Esophagus muscularis mucosa (tissue), 4 donors: ENCODE measurements at regions of chr5 and their contacts with region 1.

Region 1: DNA sequence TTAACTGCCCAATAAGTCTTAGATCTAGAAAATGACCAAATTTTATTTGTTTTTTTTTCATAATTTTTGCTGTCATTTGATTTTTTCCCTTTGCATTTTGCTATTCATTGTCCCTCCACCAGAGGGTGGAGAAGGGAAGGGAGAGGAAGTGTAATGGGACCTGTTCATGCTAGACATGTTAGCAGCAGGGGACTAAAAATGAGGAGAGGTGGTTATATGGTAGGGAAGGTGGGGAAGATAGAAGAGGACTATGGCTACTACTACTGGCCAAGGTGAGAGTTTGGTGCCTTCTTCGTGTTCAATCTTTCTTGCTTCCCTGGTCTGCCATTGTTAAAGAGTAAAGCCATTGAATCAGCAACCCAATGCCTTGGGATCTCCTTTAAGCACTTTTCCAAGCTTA is 6.4 kb downstream of the GRIA1 start:
- DNase-seq: peak; percentile 62
- H3K4me3 ChIP-seq: no peak overlapping the region
- H3K27ac ChIP-seq: no peak overlapping the region
- H3K4me1 ChIP-seq: no peaks in the 10 kb centered on the region
- H3K27me3 ChIP-seq: peaks cover 0 to 5% (median 0%) of the 10 kb centered on the region in 4 donors
- CTCF ChIP-seq: peak; percentile 43 to 69 (median 62)
- EP300 ChIP-seq: no peak
- POLR2A ChIP-seq: no peak

Region 2: DNA sequence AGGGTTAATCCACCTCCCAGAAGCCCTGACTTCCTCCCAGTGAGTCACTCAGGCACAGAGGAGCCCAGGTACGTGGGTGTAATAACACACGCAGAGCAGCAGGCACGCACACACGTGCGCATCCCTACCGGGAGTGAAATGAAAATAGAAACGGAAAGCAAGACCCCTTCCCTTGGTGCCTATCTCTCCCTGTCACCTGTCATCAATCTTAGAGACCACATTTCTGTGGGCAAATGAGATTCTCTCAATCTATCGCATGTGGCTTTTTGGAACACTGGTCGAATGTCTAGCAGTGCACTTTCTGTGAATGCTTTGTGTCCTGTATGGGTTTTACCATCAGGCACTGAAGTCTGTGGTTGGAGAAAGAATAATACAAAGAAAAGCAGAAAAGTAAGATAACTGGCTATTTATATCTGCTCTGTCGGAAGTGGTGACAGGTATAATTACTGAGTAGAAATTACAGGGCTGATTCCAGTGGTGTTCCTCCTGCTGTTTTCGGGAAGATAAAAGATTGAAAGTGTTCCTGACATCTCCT is 144.1 kb before region 1 on chr5:
- intact Hi-C with region 1: no loop called
- DNase-seq: no peak
- H3K4me3 ChIP-seq: no peak overlapping the region
- H3K27ac ChIP-seq: no peak overlapping the region
- H3K4me1 ChIP-seq: no peaks in the 10 kb centered on the region
- H3K27me3 ChIP-seq: peaks cover 0 to 16% (median 0%) of the 10 kb centered on the region in 4 donors
- CTCF ChIP-seq: no peak
- EP300 ChIP-seq: no peak
- POLR2A ChIP-seq: no peak

Region 3: DNA sequence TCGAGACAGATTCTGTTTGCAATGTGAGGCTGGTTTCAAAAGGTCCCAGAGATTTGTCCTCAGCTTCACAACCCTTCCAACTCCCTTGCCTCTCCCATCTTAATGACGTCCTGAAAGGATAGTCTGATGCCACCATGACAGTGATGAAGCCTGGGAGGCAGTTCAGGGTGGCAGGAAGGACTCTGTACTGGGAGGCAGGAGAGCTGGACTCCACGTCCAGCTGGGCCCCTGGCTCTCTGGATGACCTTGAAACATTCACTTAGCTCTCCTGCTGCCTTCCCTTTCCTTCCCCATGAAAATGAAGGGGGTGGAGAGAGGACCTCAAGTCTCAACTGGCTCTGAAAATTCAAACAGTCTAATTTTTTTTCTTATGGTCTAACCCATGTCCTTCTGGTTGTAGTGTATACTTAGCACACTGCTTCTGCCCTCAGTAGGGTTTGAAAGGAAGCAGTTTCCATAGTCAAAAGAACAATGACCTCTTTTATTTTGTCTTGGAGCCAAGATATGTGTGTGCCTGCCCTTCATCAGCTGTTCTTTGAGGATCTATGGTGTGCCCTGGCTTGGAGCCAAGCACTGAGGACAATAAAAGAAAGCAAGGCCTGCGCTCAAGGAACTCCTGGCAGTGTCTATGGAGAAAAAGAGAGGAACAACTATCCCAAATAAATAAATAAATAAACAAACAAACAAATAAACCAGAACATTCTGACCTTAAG is 181.9 kb after region 1 on chr5:
- intact Hi-C with region 1: no loop called
- DNase-seq: peak; percentile 60
- H3K4me3 ChIP-seq: no peak overlapping the region
- H3K27ac ChIP-seq: no peak overlapping the region
- H3K4me1 ChIP-seq: no peaks in the 10 kb centered on the region
- H3K27me3 ChIP-seq: no peaks in the 10 kb centered on the region
- CTCF ChIP-seq: no peak
- EP300 ChIP-seq: no peak
- POLR2A ChIP-seq: no peak

Region 4: DNA sequence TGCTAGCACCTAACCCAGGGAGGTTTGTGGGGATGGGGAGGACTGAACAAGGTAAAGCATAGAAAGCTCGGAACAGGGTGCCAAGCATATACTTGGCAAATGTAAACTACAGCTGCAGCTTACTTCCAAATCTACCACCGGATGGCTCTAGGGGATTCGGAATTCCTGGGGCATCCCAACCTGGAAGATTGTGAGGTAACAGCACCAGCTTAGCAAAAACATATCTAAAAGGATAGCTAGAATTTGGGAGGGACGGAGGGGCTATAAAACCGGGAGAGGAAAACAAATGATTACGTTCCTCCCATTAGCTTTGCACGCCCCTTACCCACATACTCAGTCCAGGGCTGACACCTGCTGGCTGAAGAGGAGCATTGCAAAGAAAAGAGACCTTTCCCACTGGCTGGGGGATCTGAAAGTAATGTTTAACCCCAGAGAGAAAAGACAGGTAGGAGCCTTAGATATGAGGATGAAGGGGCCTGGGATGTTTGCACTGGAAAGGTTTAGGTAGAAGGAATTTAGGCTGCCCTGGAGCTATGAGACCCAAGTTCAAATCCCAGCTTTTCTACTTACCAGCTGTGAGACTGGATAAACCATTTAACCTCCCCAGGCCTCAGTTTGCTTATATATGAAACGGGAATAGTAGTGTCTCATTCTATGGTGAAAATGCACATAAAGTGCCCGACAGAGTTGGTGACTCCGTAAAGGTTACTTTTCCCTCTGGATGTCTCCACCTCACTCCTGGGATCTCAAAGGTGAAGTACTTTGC is 468.2 kb after region 1 on chr5:
- intact Hi-C with region 1: loop called (anchors 2 kb)
- DNase-seq: no peak
- H3K4me3 ChIP-seq: peak overlapping the region in 1 of 4 donors; percentile 28
- H3K27ac ChIP-seq: no peak overlapping the region
- H3K4me1 ChIP-seq: peaks cover 0 to 9% (median 8%) of the 10 kb centered on the region in 4 donors
- H3K27me3 ChIP-seq: peaks cover 0 to 8% (median 0%) of the 10 kb centered on the region in 4 donors
- CTCF ChIP-seq: peak; percentile 75 to 90 (median 85)
- EP300 ChIP-seq: no peak
- POLR2A ChIP-seq: no peak